ENCODE measurements at regions of chr22 and their contacts with region 1.

Region 1: DNA sequence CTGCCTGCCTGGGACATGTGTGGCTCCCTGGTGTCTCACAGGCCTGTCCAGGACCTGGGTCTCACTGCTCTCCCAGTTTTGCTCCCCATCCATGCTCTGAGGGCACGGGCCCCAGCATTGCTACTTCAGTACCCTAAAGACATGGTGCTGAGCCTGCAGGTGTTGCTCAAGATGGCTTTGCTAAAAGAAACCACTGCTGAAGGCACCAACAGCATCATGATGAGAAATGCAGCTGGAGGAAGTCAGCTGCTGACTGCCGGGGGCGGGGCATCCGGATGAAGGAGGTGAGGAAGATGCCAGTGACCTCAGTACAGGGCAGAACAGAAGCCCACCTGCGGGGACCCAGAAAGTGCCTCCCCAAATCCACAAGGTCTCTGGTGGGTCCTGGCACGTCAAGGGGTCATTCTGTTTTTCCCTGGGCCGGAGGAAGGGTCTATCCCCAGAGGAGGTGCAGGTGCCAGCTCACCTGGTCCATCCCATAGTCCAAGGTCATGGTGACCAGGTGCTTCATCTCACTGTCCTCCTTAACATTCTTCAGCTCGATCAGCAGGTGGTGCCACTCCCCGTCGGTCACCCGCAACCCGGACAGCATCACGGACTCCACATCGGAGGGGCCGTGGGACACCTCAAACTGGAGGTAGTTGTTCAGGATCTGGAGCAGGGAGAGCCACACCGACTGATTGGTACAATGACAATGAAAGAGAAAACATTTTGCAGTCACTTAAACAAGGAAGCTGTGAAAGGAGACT is 63.9 kb downstream of the TRMU start:
- DNase-seq: no peak
- ATAC-seq: no peak
- H3K4me3 ChIP-seq: no peak overlapping the region
- H3K27ac ChIP-seq: no peak overlapping the region
- H3K4me1 ChIP-seq: no peaks in the 10 kb centered on the region
- H3K27me3 ChIP-seq: peaks cover 16% of the 10 kb centered on the region
- CTCF ChIP-seq: no peak
- POLR2A ChIP-seq: no peak
- RAD21 ChIP-seq: no peak

Region 2: GRCh38 chr22:46346680-46347405 is 52.6 kb before region 1 on chr22:
- CTCF ChIA-PET with region 1: no interaction called
- POLR2A ChIA-PET with region 1: no interaction called
- dilution Hi-C with region 1: no loop called
- in situ Hi-C with region 1: loop called (anchors 5 kb)
- intact Hi-C with region 1: no loop called
- DNase-seq: no peak
- ATAC-seq: no peak
- H3K4me3 ChIP-seq: no peak overlapping the region
- H3K27ac ChIP-seq: no peak overlapping the region
- H3K4me1 ChIP-seq: no peaks in the 10 kb centered on the region
- H3K27me3 ChIP-seq: no peaks in the 10 kb centered on the region
- CTCF ChIP-seq: no peak
- POLR2A ChIP-seq: no peak
- RAD21 ChIP-seq: no peak